ENCODE measurements at regions of chr1 and their contacts with region 1.

Region 1: GRCh38 chr1:47437447-47438164 is at the start of gene FOXD2:
- H3K4me3 ChIP-seq: peak within 1 kb of the TSS; percentile 80
- H3K27ac ChIP-seq: peak within 1 kb of the TSS; percentile 98
- H3K4me1 ChIP-seq: no peaks in the 10 kb centered on the region
- CTCF ChIP-seq: peak; percentile 98

Region 2: DNA sequence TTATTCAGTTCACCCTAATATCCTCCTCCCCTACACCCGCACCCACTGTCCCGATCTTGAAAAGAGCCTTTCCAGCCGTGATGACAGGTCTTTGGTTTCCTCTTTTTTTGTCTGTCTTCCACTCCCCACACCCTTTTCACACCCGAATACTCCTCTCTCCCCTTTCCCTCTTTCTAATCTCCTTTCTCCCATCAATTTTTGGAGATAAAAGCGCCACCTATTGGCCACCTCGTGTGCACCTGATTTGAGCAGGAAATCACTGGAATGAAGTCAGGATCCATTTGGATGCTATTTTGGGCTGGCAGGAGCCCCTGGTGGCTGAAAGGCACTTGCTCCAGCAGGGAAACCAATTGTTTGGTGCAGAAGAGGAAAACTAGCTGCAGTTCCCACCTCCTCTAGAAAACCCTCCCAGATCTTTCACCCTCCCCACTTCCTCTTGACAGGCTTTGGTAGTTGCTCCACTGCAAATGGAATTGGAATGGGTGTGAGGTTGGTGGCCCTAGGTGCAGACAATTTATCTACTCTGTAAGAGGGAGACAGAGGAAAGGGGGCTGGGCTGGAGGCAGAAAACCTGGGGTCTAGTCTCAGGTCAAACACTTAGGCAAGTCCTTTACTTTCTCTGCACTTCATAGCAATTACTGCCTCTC is 13.1 kb before region 1 on chr1:
- CTCF ChIA-PET with region 1: interaction called, 16 read pairs
- POLR2A ChIA-PET with region 1: interaction called, 3 read pairs
- H3K4me3 ChIP-seq: no peak overlapping the region
- H3K27ac ChIP-seq: no peak overlapping the region
- H3K4me1 ChIP-seq: no peaks in the 10 kb centered on the region
- CTCF ChIP-seq: peak; percentile 95

Region 3: GRCh38 chr1:47507881-47508701 is 70.5 kb after region 1 on chr1:
- CTCF ChIA-PET with region 1: interaction called, 26 read pairs
- POLR2A ChIA-PET with region 1: interaction called, 9 read pairs
- H3K4me3 ChIP-seq: peak overlapping the region; percentile 37
- H3K27ac ChIP-seq: peak overlapping the region; percentile 98
- H3K4me1 ChIP-seq: peaks cover 19% of the 10 kb centered on the region
- CTCF ChIP-seq: no peak

Region 4: DNA sequence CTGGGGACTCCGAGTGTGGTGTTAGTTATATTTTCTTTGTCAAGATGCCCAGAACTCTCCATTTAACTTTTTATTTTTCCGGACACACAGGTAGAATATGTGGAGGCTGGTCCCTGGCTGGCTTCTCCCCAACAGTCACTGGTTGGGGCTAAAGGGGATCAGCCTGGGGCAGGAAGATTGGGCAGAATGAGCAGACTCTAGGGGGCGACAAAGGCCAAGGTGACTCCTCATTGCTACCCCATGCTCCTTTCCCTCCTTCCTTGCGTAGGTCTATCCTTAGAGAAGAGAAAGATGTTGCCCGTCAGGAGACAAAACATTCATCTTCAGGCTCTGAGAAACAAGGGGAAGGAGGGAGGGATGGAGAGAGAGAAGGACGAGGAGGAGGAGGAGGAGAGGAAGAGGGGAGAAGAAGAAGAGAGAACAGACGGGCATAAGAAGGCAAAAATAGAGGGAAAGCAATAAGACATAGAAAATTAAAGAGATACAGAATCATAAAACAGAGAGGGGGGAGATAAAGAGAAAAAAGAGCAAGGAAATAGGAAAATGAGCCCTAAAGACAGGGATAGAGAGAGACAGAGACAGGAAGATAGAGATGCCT is 90.2 kb after region 1 on chr1:
- CTCF ChIA-PET with region 1: interaction called, 17 read pairs
- POLR2A ChIA-PET with region 1: no interaction called
- H3K4me3 ChIP-seq: no peak overlapping the region
- H3K27ac ChIP-seq: no peak overlapping the region
- H3K4me1 ChIP-seq: no peaks in the 10 kb centered on the region
- CTCF ChIP-seq: peak; percentile 36; the same call in 1 of the 2 replicates

Region 5: DNA sequence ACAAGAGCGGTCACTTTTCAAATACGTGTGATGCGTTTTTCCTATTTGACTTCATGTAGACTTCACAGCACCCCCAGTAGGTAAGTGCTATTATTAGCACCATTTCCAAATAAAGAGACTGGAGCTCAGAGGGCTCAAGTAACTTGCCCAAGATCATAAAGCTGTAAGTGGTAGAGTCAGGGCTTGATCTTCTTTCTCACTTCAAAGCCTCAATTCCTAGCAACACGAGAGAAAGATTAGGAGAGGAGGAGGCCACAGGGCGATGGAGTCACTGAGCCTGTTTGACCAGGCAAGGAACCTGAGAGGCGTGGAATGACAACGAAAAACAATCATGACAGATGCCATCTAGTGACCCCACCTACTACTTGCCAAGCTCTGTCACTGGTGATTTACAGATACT is 181.2 kb after region 1 on chr1:
- CTCF ChIA-PET with region 1: interaction called, 10 read pairs
- POLR2A ChIA-PET with region 1: no interaction called
- H3K4me3 ChIP-seq: no peak overlapping the region
- H3K27ac ChIP-seq: no peak overlapping the region
- H3K4me1 ChIP-seq: no peaks in the 10 kb centered on the region
- CTCF ChIP-seq: no peak

Region 6: GRCh38 chr1:47710329-47711071 is 272.9 kb after region 1 on chr1:
- CTCF ChIA-PET with region 1: interaction called, 120 read pairs
- POLR2A ChIA-PET with region 1: interaction called, 26 read pairs
- H3K4me3 ChIP-seq: no peak overlapping the region
- H3K27ac ChIP-seq: peak overlapping the region; percentile 77; the same call in 1 of the 2 replicates
- H3K4me1 ChIP-seq: peaks cover 6% of the 10 kb centered on the region; the same call in 1 of the 2 replicates
- CTCF ChIP-seq: peak; percentile 95

Measured in HEK293 (cell line).